OCI-LY7 (cell line): ENCODE measurements at regions of chr22 and their contacts with region 1.

Region 1: DNA sequence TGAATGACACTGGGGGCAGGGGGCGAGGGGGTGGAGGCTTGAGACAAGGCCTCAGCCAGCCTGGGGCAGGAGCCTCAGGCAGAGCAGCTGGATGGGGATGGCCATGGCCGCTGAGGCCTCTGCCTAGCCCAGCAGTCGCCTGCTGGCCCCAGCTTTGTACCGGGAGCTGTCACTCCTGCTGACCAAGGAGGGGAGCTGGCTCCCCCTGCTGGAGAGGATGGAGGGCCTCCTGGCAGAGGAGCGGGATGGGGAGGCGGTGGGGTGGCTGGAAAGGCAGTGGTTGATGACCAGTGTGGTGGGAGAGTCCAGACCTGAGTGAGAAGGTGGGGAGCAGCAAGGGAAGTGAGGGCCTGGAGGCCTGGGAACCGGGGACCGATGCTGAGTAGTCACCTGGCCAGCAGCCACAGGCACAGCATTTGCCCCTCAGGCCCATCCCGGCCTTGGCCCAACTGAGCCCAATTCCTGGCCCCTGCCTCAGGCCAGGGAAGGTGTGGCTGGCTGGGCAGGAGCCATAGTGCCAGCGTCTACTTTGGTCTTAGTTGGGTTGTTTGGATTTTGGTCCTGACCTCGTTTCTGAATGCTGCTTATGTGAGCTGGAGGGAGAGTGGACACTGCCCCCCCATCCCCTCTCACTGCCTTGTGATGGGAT is 6.0 kb upstream of the SUSD2 start:
- DNase-seq: peak; percentile 69
- H3K4me3 ChIP-seq: no peak overlapping the region
- H3K27ac ChIP-seq: no peak overlapping the region
- H3K4me1 ChIP-seq: no peaks in the 10 kb centered on the region
- CTCF ChIP-seq: peak; percentile 86

Region 2: DNA sequence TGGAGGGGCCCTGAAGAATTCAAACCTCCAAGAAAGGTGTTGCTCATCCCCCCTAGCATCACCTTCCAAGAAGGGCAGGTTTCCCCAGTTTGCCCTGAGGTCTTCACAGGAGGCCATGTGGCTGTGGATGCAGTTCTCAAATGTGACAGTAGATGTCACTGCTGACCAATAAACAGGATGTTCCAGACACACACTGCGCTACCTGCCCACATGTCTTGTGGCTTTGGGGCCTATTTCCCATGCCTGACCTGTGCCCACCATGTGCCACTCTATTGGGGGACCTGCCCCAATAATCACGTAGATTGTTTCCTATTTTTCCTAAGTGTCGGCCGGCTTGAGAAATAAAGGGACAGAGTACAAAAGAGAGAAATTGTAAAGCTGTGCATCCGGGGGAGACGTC is 190.9 kb before region 1 on chr22:
- CTCF ChIA-PET with region 1: no interaction called
- POLR2A ChIA-PET with region 1: no interaction called
- intact Hi-C with region 1: loop called (anchors 5 kb)
- DNase-seq: peak; percentile 64
- H3K4me3 ChIP-seq: no peak overlapping the region
- H3K27ac ChIP-seq: no peak overlapping the region
- H3K4me1 ChIP-seq: no peaks in the 10 kb centered on the region
- CTCF ChIP-seq: peak; percentile 70

Region 3: DNA sequence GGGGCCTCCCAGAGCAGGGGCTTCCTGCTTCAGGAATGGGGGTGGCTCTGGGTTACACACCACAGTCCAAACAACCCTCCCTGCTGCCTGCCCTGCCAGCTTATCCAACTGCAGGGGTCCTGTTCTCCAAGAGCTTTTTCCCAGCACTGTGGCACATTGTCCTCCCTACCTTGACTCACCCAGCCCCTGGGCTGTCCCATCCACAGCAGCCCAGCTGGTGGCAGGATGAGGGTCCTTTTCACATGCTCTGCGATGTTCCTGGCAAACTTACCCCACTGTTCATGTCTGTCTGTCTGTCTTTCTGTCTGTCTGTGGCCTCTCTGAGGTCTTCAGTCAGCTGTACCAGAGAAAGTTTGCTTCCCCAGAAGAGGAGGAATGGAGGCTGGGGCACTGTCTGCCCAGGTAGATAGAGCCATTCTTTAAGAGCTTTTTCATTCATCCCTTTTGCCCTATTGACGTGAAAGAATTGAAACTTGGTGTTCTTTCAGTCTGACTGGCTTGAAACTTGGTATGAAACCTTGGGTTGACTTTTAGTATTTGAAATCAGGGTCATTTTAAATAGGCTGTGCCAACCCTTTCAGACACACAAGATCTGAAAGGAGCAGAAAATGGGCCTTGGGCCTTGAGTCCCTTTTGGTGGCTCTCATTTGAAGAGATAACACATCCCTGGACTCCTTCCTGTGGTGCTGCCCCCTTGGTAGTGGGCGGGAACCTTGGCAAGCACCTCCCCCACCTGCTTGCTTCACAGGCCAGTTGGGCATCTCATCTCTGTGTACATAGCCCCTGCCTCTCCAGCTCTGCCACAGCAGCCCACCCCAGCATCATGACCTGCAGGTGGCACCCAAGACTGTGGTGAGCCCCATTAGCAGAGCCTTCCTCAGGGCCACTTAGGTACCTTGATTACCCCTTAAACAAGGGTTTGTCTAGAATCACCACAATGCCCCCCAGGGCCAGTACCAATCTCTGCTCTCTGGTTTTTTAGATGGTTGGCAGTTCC is 68.6 kb before region 1 on chr22:
- CTCF ChIA-PET with region 1: no interaction called
- POLR2A ChIA-PET with region 1: no interaction called
- intact Hi-C with region 1: loop called (anchors 1 kb)
- DNase-seq: peak; percentile 45
- H3K4me3 ChIP-seq: no peak overlapping the region
- H3K27ac ChIP-seq: no peak overlapping the region
- H3K4me1 ChIP-seq: no peaks in the 10 kb centered on the region
- CTCF ChIP-seq: peak; percentile 47